ENCODE measurements at regions of chr3 and their contacts with region 1.

Region 1: GRCh38 chr3:177961784-177962183 is 574.5 kb upstream of the KCNMB2 start:
- DNase-seq: no peak
- H3K4me3 ChIP-seq: no peak overlapping the region
- H3K27ac ChIP-seq: no peak overlapping the region
- H3K4me1 ChIP-seq: no peaks in the 10 kb centered on the region
- H3K27me3 ChIP-seq: no peaks in the 10 kb centered on the region
- CTCF ChIP-seq: no peak

Region 2: DNA sequence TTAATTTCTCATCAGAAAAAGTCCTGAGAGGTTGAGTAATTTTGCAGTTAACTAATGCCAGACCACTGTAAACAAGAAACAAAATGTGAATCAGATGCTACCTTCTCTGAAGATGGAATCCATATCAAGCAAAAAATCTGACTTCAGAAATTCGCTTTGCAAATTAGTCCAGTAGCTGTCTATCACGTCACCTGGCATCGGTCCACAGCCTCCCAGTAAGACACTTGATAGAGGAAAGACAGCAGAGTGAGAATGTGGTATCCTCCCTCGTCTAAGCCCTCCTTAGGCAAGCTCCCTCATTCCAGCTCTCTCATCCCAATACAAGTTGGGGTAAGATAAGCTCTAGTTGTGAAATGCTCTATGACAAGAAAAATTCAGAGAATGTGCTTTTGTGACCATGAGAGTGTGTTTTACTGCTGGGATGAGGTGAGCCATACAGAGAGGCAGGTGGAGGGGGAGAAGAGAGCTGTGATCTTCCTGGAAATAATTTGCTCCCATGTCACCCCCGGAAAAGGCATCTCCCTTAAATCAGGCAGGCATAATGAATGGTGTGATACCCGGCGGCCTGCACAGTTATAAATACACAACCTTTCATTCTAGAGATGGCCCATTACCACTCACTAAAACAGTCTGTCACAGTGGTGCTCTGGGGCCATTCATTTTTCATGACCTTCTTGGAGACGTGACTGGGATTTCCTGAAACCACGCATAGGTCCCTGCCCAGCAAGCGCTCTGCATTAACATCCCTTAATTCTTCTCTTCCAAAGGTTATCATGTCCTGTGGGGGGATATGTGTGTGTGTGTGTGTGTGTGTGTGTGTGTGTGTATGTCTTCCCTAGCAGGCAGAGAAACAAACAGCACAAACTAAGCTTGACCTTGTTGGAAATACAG is 27.5 kb before region 1 on chr3:
- CTCF ChIA-PET with region 1: no interaction called
- POLR2A ChIA-PET with region 1: no interaction called
- intact Hi-C with region 1: no loop called
- DNase-seq: no peak
- H3K4me3 ChIP-seq: no peak overlapping the region
- H3K27ac ChIP-seq: no peak overlapping the region
- H3K4me1 ChIP-seq: peaks cover 4% of the 10 kb centered on the region
- H3K27me3 ChIP-seq: no peaks in the 10 kb centered on the region
- CTCF ChIP-seq: no peak

Region 3: DNA sequence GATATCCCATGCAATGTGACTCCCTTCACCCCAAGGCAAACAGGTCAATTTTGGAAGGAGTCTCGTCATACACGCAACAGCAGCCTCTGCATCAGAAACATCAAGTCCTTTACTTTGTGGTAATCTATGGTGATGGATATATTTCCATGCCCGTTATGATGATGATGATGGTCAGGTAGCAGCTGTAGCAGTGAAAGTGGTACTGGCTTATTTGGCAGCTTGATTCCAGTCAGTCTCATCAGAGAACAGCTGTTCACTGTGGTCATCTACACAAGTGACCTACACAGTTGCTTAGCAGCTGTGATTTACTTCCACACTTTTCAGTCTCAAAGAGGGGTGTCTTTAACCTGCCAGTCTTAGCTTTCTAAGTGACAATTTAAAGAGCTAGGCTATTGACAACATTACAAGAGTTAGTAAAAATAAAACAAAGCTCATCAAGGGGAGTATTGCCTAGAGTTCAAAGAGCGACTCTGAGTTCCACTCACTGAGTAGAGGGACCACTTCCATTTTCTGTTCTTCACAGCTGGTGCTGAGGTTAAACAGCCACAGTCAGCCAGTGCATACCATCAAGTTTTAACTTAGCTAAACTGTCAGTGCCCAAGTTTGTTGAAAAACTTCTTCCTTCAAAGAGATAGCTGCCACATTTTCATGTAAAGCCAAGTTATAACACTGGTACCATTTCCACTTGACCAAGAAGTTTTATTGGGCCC is 12.9 kb before region 1 on chr3:
- CTCF ChIA-PET with region 1: no interaction called
- POLR2A ChIA-PET with region 1: no interaction called
- intact Hi-C with region 1: loop called (anchors 2 kb)
- DNase-seq: no peak
- H3K4me3 ChIP-seq: no peak overlapping the region
- H3K27ac ChIP-seq: no peak overlapping the region
- H3K4me1 ChIP-seq: 0 out of 2 replicates have a peak, but pooled peaks cover 11% of the 10 kb centered on the region
- H3K27me3 ChIP-seq: no peaks in the 10 kb centered on the region
- CTCF ChIP-seq: no peak